Mucosa of descending colon (tissue), 3 donors: ENCODE measurements at regions of chr11 and their contacts with region 1.

Region 1: DNA sequence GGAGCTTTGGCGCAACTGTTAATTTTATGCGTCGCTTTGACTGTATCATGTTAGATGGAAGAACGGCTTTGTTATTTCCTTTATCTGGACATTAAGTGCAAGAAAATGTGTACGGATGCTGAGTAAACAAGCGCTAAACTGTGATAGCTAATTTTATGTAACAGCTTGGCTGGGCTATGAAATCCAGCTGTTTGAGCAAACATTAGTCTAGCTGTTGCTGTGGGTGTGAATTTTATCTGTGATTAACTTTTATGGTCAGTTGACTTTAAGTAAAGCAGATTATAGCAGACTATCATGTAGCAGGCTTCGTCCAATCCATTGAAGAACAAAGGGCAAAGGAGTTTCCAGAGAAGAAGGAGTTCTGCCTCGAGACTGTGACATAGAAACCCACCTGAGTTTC is 14.0 kb downstream of the OR8A1 start:
- DNase-seq: peak in 1 of 3 donors; percentile 27
- ATAC-seq: peak; percentile 90
- H3K4me3 ChIP-seq: no peak overlapping the region
- H3K4me1 ChIP-seq: peaks cover 9% of the 10 kb centered on the region
- CTCF ChIP-seq: no peak

Region 2: DNA sequence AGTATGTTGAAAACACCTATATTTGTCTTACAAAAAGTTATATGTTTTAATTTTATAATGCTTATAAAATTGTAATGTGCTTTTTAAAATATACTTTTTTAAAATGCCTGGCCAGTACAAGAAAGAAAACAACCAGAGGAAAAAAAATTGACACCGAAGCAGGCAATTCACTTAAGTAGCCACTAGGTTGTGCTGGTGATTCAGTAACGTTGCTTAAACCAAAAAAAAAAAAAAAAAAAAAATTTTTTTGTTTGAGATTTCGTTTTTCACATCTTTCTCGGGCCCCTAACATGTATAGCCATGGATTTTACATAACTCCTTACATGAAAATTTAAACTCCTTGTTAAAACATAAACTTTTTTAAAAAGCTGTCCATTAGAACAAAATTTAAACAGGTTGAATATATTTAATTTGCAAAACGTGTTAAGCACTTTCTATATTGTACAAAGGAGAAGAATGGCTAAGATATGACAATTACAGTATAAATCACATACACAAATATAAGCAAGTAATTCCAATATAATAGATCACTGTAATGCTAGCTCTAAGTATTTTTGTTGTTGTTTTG is 168.3 kb before region 1 on chr11:
- intact Hi-C with region 1: loop called in 1 of 2 experiments (anchors 2 kb)
- DNase-seq: peak in 1 of 3 donors; percentile 2
- ATAC-seq: no peak
- H3K4me3 ChIP-seq: no peak overlapping the region
- H3K4me1 ChIP-seq: no peaks in the 10 kb centered on the region
- CTCF ChIP-seq: peak; percentile 43